ENCODE measurements at regions of chr15 and their contacts with region 1.

Region 1: DNA sequence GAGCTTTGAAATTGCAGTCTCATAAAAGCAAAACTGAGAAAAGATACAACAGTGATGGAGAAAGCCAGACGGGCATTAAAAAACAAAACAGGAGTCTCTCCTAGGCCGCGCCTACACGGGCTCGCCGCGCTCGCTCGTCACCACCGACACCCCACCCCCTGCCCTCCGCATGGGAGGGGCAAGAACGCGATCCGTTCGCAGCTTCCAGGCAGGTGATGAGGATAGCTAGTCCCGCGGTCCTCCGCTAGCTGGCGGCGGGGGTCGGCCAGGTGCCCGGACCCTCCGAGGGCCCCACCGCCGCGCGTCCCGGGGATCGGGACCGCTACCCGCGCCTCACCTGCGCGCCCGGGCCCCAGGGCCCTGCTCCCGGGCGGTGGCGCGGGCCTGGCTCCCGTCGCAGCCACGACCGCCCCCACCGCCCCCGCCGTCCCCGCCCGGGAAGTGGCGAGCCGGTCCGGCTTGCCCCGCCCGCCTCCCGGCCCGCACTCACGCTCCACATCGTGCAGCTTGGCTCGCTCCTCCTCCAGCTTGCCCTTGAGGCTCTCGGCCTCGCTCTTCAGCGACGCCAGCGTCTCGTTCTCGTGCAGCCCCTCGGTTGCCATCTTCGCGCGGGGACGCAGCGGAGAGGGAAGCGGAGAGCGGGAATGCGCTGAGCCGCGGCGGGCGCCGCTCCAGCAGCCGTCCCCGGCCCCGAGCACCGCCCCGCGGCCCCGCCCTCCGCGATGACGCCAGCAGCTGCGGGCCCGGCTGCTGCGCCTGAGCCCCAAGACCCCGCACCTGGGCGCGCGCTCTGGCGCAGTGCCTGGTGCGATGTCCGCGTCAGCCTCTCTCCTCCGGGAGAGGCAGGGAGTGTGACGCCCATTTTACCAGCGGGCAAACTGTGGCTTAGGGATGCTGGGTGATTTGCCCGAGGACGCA is 11.7 kb downstream of the GNB5 start:
- DNase-seq: peak; percentile 46 to 52
- ATAC-seq: peak; percentile 75 to 84
- H3K4me3 ChIP-seq: peak overlapping the region; percentile 58 to 93 (median 72)
- H3K27ac ChIP-seq: peak overlapping the region; percentile 46 to 76 (median 63)
- H3K4me1 ChIP-seq: peaks cover 4 to 11% of the 10 kb centered on the region in 2 donors
- H3K27me3 ChIP-seq: peaks cover 0 to 18% (median 0%) of the 10 kb centered on the region in 3 donors
- CTCF ChIP-seq: no peak
- POLR2A ChIP-seq: peak; percentile 21 to 50

Region 2: DNA sequence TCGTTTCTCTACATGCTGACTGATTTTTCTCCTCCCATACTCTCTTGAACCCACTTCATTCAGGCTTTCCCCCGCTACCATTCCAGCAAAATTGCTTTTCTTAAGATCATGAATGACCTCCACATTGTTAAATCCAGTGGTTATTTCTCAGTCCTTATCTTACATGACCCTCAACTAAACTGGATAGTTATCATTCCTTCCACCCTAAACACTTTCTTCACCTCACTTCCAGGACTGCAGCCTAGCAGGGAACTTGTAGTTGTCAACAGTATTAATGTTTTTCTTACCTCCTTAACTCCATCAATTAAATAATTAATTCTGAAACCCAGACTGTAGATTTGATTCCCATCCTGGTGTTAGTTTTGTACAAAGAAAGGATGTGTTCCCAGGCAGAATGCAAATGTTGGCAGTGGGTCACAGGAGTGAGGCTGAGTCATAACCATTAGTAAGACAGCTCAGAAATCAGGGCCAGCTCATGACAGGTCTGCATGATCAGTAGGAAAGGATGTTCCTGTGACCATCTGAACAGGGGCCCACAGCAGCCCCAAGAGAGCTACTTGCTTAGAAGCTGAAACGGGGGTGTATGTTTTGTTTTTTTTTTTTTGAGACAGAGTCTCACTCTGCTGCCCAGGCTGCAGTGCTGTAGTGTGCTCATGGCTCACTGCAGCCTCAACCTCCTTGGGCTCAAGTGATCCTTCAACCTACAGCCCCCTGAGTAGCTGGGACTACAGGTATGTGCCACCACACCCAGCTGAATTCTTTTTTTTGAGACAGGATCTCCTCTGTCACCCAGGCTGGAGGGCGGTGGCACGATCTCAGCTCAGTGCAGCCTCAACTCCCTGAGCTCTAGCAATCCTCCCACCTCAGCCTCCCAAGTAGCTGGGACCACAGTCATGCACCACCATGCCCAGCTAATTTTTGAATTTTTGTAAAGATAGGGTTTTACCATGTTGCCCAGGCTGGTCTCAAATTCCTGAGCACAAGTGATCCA is 76.0 kb before region 1 on chr15:
- in situ Hi-C with region 1: no loop called
- intact Hi-C with region 1: loop called (anchors 10 kb)
- DNase-seq: peak; percentile 51 to 57
- ATAC-seq: peak; percentile 73 to 86
- H3K4me3 ChIP-seq: no peak overlapping the region
- H3K27ac ChIP-seq: no peak overlapping the region
- H3K4me1 ChIP-seq: no peaks in the 10 kb centered on the region
- H3K27me3 ChIP-seq: no peaks in the 10 kb centered on the region
- CTCF ChIP-seq: no peak
- POLR2A ChIP-seq: no peak

Region 3: GRCh38 chr15:52227456-52227855 is 47.9 kb after region 1 on chr15:
- in situ Hi-C with region 1: loop called in 1 of 4 experiments (anchors 10 kb)
- intact Hi-C with region 1: loop called (anchors 2 kb)
- DNase-seq: peak; percentile 30 to 64
- ATAC-seq: peak; percentile 92 to 93
- H3K4me3 ChIP-seq: no peak overlapping the region
- H3K27ac ChIP-seq: no peak overlapping the region
- H3K4me1 ChIP-seq: no peaks in the 10 kb centered on the region
- H3K27me3 ChIP-seq: no peaks in the 10 kb centered on the region
- CTCF ChIP-seq: peak; percentile 45 to 79 (median 69)
- POLR2A ChIP-seq: no peak

Region 4: DNA sequence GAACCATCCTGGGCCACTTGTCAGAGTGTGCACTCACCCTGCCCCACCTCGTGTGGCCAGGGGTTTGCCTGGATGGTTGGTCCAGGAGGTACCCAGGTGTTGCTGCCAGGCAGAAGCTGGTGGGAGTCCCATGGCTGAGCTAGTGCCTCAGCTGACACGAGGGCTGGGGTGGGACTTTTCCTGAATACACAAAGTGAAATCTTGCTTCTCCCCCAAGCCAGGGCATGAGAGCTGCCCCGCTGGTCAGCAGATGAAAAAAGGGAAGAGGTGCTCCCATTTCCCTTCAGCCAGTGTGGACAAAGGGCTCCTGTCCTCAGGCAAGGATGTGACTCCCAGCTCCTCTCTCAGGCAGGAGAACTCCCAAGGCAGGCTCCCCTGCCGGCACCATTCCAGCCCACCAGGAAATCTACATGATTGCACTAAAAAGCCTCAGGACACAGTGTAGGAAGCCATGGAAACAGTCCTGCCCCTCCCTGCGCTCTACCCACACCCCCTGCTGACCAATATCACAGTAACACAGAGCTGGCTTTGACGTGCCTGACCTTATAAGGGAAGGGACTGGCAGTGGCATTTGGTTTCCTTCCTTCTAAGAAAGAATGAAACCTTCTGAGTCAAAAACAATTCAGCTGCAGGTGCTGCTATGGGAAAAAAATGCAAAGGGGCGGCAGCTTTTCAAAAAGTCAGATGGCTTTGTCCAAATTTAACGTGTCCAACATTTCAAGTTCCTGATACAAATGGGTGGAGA is 82.1 kb after region 1 on chr15:
- in situ Hi-C with region 1: no loop called
- intact Hi-C with region 1: no loop called
- DNase-seq: peak; percentile 11 to 25
- ATAC-seq: peak; percentile 38 to 55
- H3K4me3 ChIP-seq: no peak overlapping the region
- H3K27ac ChIP-seq: peak overlapping the region; percentile 65 to 75 (median 68)
- H3K4me1 ChIP-seq: peaks cover 17 to 21% of the 10 kb centered on the region in 2 donors
- H3K27me3 ChIP-seq: no peaks in the 10 kb centered on the region
- CTCF ChIP-seq: no peak
- POLR2A ChIP-seq: no peak